ENCODE measurements at regions of chr3 and their contacts with region 1.

Region 1: DNA sequence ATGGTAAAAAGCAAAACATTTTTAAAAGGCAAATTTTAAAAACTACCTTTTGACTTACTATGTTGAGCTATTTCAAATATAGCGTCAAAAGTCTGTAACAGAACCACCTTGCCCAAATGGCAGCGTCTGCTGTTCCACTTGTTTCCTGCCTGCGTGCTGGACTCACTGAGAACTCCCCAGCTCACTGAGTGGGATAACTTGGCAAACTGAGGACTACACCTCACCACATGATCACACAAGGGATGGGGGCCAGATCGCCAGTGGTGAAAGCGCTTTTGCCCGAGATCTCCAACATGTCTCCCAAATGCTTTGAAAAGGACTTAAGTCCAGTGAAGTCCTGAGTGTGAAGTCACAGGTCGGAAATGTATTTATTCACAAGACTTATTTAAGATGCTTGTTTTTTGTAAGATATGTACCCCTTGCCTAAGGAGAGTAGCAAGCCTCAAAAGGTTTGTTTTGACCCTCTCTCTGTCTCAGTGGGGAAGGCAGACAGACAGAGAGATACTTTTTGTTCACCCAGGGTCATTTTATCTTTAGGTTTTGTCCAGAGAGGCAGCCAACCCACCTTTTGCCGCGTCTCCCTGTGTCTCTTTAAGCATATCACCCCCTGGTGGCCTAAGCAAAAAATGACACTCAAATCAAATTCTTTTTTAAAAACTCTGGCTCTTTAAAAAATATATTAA is 192.6 kb downstream of the PDZRN3 start:
- DNase-seq: no peak
- ATAC-seq: peak; percentile 43
- H3K4me3 ChIP-seq: no peak overlapping the region
- H3K27ac ChIP-seq: no peak overlapping the region
- H3K4me1 ChIP-seq: peaks cover 4% of the 10 kb centered on the region
- H3K27me3 ChIP-seq: no peaks in the 10 kb centered on the region
- CTCF ChIP-seq: peak; percentile 66

Region 2: GRCh38 chr3:73100741-73101559 is 331.2 kb before region 1 on chr3:
- intact Hi-C with region 1: loop called (anchors 5 kb)
- DNase-seq: peak; percentile 67
- ATAC-seq: peak; percentile 94
- H3K4me3 ChIP-seq: no peak overlapping the region
- H3K27ac ChIP-seq: no peak overlapping the region
- H3K4me1 ChIP-seq: no peaks in the 10 kb centered on the region
- H3K27me3 ChIP-seq: no peaks in the 10 kb centered on the region
- CTCF ChIP-seq: peak; percentile 96

Measured in upper lobe of right lung (tissue), 1 donor.